PC-3 (cell line): ENCODE measurements at regions of chr11 and their contacts with region 1.

Region 1: DNA sequence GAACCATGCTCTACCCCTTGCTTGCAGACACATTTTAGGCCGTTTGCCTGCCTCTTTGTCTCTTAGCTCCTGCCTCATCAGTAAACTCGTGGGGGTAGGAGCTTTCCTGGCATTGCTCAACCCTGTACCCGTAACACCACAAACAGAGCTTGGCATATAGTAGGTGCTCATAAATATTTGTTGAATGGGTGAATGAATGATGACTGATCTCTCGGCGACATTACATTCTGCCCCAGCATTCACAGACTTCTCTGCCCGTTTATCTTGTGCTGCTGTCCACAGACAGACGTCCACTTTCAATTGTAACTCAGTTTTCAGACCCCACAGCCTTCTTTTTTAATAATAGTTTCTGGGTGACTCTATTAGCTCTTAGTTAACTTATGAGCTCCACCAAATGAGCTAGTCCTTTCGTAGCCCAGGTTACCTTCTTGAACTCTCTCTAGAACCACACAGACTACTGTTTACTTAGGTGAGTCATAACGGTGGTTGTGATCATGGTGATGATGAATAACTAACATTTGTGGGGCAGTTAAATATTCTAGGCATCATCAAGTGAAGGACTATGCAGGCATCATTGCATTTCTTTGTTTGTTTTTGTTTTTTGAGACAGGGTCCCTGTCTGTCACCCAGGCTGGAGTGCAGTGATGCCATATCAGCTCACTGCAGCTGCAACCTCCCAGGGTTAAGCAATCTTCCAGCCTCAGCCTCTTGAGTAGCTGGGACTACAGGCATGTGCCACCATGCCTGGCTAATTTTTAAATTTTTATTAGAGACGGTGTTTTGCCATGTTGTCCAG is 188.5 kb downstream of the ADAMTS15 start:
- DNase-seq: peak; percentile 99
- ATAC-seq: peak; percentile 66
- H3K4me3 ChIP-seq: peak overlapping the region; percentile 48
- H3K27ac ChIP-seq: peak overlapping the region; percentile 97
- H3K4me1 ChIP-seq: peaks cover 64% of the 10 kb centered on the region
- H3K27me3 ChIP-seq: no peaks in the 10 kb centered on the region
- CTCF ChIP-seq: no peak

Region 2: DNA sequence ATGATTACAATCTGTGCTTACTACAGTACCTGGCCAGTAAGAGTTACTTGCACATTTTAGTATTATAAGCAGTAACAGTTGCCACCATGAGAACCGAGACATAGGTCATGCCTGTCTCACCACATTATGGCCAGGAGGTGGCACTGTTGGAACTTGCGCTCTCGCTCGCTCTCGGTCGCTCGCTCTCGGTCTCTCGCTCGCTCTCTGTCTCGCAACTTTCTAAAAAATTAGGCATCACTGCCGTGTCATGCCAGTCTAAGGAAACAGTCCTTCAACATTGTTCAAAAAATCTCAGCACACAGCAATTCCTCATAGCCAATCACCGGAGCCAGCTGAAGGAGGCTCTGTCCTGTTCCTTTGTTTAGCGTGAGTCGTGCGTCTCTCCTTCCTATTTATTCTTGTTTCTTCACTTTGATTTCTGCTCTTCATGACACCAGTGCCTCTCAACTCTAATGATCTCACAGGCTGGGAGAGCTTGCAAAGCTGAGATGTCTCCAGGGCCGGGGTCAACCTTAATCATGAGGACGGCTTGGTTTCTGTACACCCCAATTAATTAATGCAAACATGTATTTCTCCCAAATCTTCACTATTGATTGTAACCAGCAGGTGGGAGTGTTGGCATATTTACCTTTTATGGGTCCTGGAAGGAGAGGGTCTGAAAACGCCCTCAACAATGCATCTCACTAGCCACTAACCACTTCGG is 202.2 kb before region 1 on chr11:
- CTCF ChIA-PET with region 1: interaction called, 4 read pairs
- POLR2A ChIA-PET with region 1: no interaction called
- intact Hi-C with region 1: loop called (anchors 1 kb)
- DNase-seq: peak; percentile 96
- ATAC-seq: peak; percentile 76
- H3K4me3 ChIP-seq: peak overlapping the region; percentile 75
- H3K27ac ChIP-seq: peak overlapping the region; percentile 80
- H3K4me1 ChIP-seq: peaks cover 21% of the 10 kb centered on the region
- H3K27me3 ChIP-seq: peaks cover 11% of the 10 kb centered on the region
- CTCF ChIP-seq: peak; percentile 83

Region 3: GRCh38 chr11:130522284-130522961 is 114.5 kb before region 1 on chr11:
- CTCF ChIA-PET with region 1: no interaction called
- POLR2A ChIA-PET with region 1: no interaction called
- intact Hi-C with region 1: loop called (anchors 2 kb)
- DNase-seq: peak; percentile 93
- ATAC-seq: peak; percentile 96
- H3K4me3 ChIP-seq: no peak overlapping the region
- H3K27ac ChIP-seq: peak overlapping the region; percentile 70
- H3K4me1 ChIP-seq: peaks cover 32% of the 10 kb centered on the region
- H3K27me3 ChIP-seq: no peaks in the 10 kb centered on the region
- CTCF ChIP-seq: no peak

Region 4: DNA sequence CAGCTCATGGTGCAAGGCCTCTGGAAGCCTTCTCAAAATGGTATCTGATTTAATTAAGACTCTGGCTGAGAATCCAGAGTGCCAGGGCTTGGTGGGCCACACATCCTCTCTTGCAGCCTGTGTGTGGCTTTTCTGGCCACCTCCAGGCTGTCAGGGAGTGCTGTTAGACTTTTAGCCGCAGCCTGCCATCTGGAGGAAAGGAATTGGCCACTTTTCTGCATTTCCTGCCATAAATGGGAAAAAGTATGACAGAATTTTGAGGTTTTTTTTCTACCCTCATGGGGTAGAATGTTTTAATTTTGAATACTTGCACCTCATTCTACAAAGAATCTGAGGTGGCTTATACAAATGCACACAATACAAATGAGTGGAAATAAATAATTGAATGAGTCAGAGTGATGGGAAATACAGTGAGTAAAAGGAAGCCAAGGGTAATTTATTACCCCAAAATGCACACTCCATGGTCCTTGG is 29.9 kb after region 1 on chr11:
- CTCF ChIA-PET with region 1: no interaction called
- POLR2A ChIA-PET with region 1: no interaction called
- intact Hi-C with region 1: loop called (anchors 2 kb)
- DNase-seq: peak; percentile 36
- ATAC-seq: peak; percentile 77
- H3K4me3 ChIP-seq: no peak overlapping the region
- H3K27ac ChIP-seq: peak overlapping the region; percentile 9; the same call in 1 of the 2 replicates
- H3K4me1 ChIP-seq: peaks cover 9% of the 10 kb centered on the region
- H3K27me3 ChIP-seq: no peaks in the 10 kb centered on the region
- CTCF ChIP-seq: peak; percentile 36

Region 5: GRCh38 chr11:130740819-130741218 is 103.9 kb after region 1 on chr11:
- CTCF ChIA-PET with region 1: no interaction called
- POLR2A ChIA-PET with region 1: no interaction called
- intact Hi-C with region 1: loop called (anchors 10 kb)
- DNase-seq: no peak
- ATAC-seq: no peak
- H3K4me3 ChIP-seq: no peak overlapping the region
- H3K27ac ChIP-seq: no peak overlapping the region
- H3K4me1 ChIP-seq: peaks cover 46% of the 10 kb centered on the region
- H3K27me3 ChIP-seq: no peaks in the 10 kb centered on the region
- CTCF ChIP-seq: no peak

Region 6: GRCh38 chr11:130827451-130828377 is 190.8 kb after region 1 on chr11:
- CTCF ChIA-PET with region 1: interaction called, 18 read pairs
- POLR2A ChIA-PET with region 1: no interaction called
- intact Hi-C with region 1: loop called (anchors 2 kb)
- DNase-seq: peak; percentile 93
- ATAC-seq: peak; percentile 95
- H3K4me3 ChIP-seq: no peak overlapping the region
- H3K27ac ChIP-seq: peak overlapping the region; percentile 58
- H3K4me1 ChIP-seq: peaks cover 23% of the 10 kb centered on the region
- H3K27me3 ChIP-seq: no peaks in the 10 kb centered on the region
- CTCF ChIP-seq: peak; percentile 89

Region 7: GRCh38 chr11:131544591-131544990 is 907.7 kb after region 1 on chr11:
- CTCF ChIA-PET with region 1: no interaction called
- POLR2A ChIA-PET with region 1: interaction called, 11 read pairs
- intact Hi-C with region 1: no loop called
- DNase-seq: no peak
- ATAC-seq: no peak
- H3K4me3 ChIP-seq: no peak overlapping the region
- H3K27ac ChIP-seq: no peak overlapping the region
- H3K4me1 ChIP-seq: no peaks in the 10 kb centered on the region
- H3K27me3 ChIP-seq: peaks cover 44% of the 10 kb centered on the region
- CTCF ChIP-seq: no peak